ENCODE measurements at regions of chr12 and their contacts with region 1.

Region 1: DNA sequence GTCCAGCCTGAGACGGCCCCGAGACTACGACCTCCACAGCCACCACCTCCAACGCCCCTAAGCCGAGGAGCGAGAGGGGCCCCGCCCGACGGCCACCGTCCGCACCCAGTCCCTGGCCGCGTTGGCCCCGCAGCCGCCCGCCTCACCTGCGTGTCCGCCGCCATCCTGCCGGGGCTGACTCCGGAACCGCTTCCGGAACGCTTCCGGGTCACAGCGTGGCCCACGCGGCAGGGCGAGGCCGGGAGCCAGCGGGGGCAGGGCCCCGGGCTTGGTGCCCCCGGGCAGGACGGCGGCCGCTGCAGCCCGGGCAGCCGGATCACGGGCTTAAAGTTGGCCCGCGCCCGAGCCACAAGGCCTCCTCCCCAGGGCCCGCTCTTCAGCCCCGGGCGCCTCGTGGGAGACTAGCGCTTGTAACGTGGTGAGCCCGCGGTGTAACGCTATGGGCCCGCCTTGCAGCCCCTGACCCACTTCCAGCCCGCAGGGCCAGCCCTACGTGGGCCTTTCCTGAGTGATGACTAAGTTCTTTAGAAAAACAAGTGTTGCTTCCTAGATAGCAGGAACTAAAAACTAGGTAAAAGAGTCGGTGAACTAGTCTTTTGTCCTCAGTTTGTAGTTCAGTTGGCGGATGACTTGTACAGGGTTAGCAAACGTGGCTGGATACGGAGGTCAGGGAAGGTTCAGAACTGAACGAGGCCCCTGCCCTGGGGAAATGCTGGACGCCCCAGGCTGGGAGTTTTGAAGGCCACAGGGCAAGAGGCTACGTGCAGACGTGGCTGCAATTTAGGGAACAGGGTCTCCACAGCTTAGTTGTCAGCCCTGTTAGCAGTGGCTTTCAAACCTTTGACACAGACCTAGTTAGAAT is at the start of gene GCN1:
- DNase-seq: no peak
- ATAC-seq: peak; percentile 86
- H3K4me3 ChIP-seq: peak within 1 kb of the TSS; percentile 62
- H3K27ac ChIP-seq: peak within 1 kb of the TSS; percentile 93
- H3K4me1 ChIP-seq: peaks cover 33% of the 10 kb centered on the region
- H3K27me3 ChIP-seq: no peaks in the 10 kb centered on the region
- CTCF ChIP-seq: no peak
- EP300 ChIP-seq: no peak
- POLR2A ChIP-seq: peak; percentile 96
- RAD21 ChIP-seq: no peak
- polyA plus RNA-seq, gene GCN1: 10.8 to 12.1 TPM

Region 2: GRCh38 chr12:120175062-120175461 is 19.7 kb before region 1 on chr12:
- CTCF ChIA-PET with region 1: interaction called, 27 read pairs
- POLR2A ChIA-PET with region 1: interaction called, 3 read pairs
- RAD21 ChIA-PET with region 1: interaction called, 3 read pairs
- SMC1A ChIA-PET with region 1: interaction called, 5 read pairs
- in situ Hi-C with region 1: no loop called
- intact Hi-C with region 1: no loop called
- DNase-seq: peak; percentile 57
- ATAC-seq: peak; percentile 61
- H3K4me3 ChIP-seq: no peak overlapping the region
- H3K27ac ChIP-seq: no peak overlapping the region
- H3K4me1 ChIP-seq: peaks cover 2% of the 10 kb centered on the region; the same call in 1 of the 2 replicates
- H3K27me3 ChIP-seq: no peaks in the 10 kb centered on the region
- CTCF ChIP-seq: no peak
- EP300 ChIP-seq: no peak
- POLR2A ChIP-seq: no peak
- RAD21 ChIP-seq: no peak

Measured in GM12878 (cell line).